WTC11 (cell line): ENCODE measurements at regions of chr1 and their contacts with region 1.

Region 1: DNA sequence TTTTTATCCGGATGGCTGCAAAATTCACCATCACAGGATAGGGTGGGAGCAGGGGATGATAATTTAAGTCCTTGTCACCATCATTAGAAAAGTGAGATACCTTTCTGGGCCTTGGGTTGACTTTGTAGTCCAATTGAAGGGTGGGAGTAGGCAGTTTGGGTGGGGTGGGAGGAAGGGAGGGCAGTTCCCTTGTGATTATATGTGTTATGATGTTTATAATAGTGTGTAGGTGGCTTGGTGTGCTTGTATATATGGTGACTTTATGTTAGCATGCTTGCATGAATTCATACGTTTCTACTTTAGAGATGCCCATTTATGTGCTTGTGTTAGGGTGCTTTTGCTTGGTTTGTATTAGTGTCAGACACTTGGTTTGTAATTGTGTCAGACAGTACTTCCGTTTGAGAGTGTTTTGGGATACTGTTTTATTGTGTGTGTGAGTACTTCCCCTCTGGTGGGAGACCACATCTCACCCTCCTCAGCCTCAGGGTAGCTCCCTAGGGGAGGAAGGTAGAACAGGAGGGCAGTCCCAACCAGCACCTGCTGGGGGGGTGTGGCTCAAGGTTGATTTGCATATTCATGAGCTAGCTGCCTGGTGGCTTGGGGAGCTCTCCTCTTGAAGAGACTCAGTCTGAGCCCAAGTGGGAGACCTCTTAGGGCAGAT is 6.3 kb upstream of the POU3F1 start:
- DNase-seq: peak; percentile 75
- ATAC-seq: peak; percentile 94
- H3K4me3 Mint-ChIP-seq: no peak overlapping the region
- H3K27ac Mint-ChIP-seq: no peak overlapping the region
- H3K4me1 Mint-ChIP-seq: peaks cover 46% of the 10 kb centered on the region
- H3K27me3 Mint-ChIP-seq: peaks cover 12% of the 10 kb centered on the region
- CTCF ChIP-seq: no peak

Region 2: DNA sequence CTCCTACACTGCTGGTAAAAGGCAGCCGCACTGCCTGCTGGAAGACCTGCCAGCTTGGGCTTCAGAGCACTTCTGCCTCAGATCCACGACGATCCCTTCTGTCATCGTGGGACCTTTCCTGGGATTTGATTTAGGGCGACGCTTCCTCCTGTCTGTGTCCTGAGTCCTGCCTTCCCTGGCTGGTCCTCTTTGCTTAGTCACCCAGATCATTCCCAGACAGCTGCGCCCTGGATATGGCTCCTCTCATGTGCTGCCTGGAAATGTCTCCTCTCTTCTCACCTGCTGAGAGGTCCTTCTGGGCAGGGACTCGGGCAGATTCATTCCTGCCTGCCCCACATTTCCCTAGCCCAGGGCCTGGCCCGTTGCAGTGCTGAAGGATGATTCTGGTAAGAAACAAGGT is 66.1 kb after region 1 on chr1:
- CTCF ChIA-PET with region 1: no interaction called
- POLR2A ChIA-PET with region 1: no interaction called
- DNase-seq: no peak
- ATAC-seq: no peak
- H3K4me3 Mint-ChIP-seq: no peak overlapping the region
- H3K27ac Mint-ChIP-seq: peak overlapping the region; percentile 73
- H3K4me1 Mint-ChIP-seq: peaks cover 27% of the 10 kb centered on the region
- H3K27me3 Mint-ChIP-seq: no peaks in the 10 kb centered on the region; the same call in 1 of the 2 replicates
- CTCF ChIP-seq: no peak

Region 3: DNA sequence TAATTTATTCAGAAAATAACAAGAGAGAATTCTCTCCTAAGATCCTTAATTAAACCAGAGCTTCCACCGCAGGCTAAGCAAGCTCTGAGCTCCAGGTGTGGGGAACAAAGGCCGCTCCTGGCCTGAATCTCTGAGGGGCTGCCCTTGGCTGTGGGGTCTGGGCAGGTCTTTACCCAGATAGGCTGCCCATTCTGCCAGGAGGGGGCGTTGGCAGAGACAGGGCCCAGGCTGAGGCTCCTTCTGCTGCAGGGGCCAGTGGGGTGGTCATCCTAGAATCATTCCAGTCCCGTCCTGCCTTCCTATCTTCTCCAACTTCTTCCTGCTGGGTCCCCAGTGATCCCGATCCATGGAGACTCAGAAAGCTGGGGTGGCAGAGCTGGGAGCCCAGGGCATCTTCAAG is 76.6 kb after region 1 on chr1:
- CTCF ChIA-PET with region 1: interaction called, 10 read pairs
- POLR2A ChIA-PET with region 1: no interaction called
- DNase-seq: peak; percentile 51
- ATAC-seq: peak; percentile 72
- H3K4me3 Mint-ChIP-seq: no peak overlapping the region
- H3K27ac Mint-ChIP-seq: no peak overlapping the region
- H3K4me1 Mint-ChIP-seq: peaks cover 35% of the 10 kb centered on the region
- H3K27me3 Mint-ChIP-seq: no peaks in the 10 kb centered on the region; the same call in 1 of the 2 replicates
- CTCF ChIP-seq: no peak

Region 4: GRCh38 chr1:38527373-38527966 is 474.6 kb after region 1 on chr1:
- CTCF ChIA-PET with region 1: interaction called, 11 read pairs
- POLR2A ChIA-PET with region 1: no interaction called
- DNase-seq: peak; percentile 26
- ATAC-seq: peak; percentile 43; the same call in 1 of the 2 replicates
- H3K4me3 Mint-ChIP-seq: no peak overlapping the region
- H3K27ac Mint-ChIP-seq: no peak overlapping the region
- H3K4me1 Mint-ChIP-seq: peaks cover 8% of the 10 kb centered on the region; the same call in 1 of the 2 replicates
- H3K27me3 Mint-ChIP-seq: no peaks in the 10 kb centered on the region; the same call in 1 of the 2 replicates
- CTCF ChIP-seq: no peak